CD14-positive monocyte (primary cell): ENCODE measurements at regions of chrX and their contacts with region 1.

Region 1: DNA sequence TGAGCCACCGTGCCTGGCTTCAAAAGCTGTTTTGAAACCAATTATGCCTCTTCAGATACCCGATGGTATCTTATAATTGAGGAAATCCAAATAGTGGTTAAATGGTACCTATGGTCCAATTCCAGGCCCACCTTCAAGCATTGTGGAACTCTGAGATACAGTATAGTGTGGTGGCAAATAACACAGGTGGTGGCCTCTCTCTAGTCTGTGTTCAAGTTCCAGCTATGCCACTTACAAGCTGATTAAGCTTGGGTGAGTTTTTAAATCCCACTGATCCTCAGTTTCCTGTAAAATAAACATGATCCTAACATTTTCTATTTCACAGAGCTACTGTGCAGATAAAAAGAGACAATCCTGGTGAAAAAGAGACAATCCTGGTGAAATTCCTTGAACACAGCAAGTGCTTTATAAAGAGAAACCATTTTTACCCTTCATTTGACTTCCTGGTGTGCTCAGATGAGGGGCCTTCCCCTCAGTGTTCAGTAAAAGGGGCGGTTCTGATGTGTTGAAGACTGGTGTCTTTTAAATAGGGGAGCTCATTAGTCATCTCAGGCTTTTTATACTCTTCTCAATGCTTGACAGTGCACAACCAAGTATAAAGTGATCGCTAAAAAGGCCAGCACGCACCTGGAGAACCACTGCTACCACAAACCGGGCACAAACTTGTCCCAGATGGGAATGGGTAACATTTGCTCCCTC is 30.8 kb upstream of the CD40LG start:
- DNase-seq: no peak
- H3K4me3 ChIP-seq: no peak overlapping the region
- H3K4me3 Mint-ChIP-seq: no peak overlapping the region
- H3K27ac ChIP-seq: no peak overlapping the region
- H3K27ac Mint-ChIP-seq: no peak overlapping the region
- H3K4me1 ChIP-seq: no peaks in the 10 kb centered on the region
- H3K4me1 Mint-ChIP-seq: no peaks in the 10 kb centered on the region
- H3K27me3 ChIP-seq: no peaks in the 10 kb centered on the region
- H3K27me3 Mint-ChIP-seq: peaks cover 0 to 3% (median 0%) of the 10 kb centered on the region in 3 donors
- CTCF ChIP-seq: no peak

Region 2: DNA sequence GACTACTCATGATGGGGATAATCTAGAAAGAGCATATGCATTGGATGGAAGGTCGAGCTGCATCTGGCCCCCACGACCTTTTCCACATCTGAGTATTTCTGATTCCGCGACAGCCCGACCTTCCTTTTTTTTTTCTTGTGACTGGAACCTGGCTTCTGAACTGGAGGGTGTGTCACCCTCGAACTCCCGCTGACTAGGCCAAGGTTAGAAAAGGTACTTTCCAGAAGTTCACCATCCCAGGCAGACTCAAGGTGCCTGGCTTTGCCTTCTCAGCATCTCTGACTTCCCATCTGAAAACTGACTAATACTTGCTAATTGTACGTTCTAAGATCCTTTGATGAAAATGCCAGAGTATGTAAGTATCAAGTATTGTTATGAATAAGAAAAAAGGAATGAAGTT is 18.5 kb before region 1 on chrX:
- intact Hi-C with region 1: no loop called
- DNase-seq: no peak
- H3K4me3 ChIP-seq: no peak overlapping the region
- H3K4me3 Mint-ChIP-seq: no peak overlapping the region
- H3K27ac ChIP-seq: no peak overlapping the region
- H3K27ac Mint-ChIP-seq: no peak overlapping the region
- H3K4me1 ChIP-seq: no peaks in the 10 kb centered on the region
- H3K4me1 Mint-ChIP-seq: peaks cover 4% of the 10 kb centered on the region
- H3K27me3 ChIP-seq: no peaks in the 10 kb centered on the region
- H3K27me3 Mint-ChIP-seq: peaks cover 0 to 8% (median 0%) of the 10 kb centered on the region in 3 donors
- CTCF ChIP-seq: no peak

Region 3: DNA sequence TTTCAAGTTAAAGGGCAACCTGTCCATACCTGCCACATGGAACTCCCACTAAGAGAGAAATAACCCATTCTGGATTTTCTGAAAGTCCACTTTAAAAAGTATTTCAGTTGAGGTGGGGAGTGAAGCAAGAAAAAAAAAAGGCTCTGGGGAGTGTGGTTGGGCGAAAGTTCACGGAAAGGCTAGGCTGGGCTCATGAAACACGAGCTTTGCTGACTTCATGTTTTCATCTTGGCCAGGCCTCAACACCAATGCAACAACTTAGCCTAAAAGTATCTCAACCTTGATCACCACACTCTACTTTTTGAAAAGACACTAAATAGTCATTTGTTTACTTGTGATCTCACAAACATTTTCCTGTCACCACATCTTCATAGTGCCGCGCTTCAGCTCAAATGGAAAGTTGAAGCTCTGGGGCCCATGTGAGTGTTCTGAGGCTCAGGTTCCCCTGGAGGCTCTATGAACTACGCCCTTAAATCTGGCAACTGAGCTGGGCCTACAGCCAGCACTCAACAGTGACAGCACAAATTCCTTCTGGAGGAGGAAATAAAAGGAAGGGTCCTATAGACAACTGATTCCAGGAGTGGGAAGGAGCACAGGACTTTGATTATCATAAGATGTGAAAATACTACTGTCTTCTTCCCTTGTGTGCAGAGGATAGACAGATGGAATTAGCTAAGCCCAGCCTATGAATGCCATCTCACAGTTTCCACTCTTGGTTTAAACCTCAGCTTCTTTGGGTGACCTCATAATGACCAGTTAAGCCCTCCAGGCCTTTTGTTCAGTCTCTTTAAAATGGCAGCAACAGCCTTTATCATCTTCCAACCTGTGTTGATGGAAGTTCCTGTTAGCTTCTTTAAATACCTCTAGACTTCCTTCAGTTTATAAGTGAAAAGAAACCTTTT is 35.9 kb after region 1 on chrX:
- intact Hi-C with region 1: no loop called
- DNase-seq: no peak
- H3K4me3 ChIP-seq: no peak overlapping the region
- H3K4me3 Mint-ChIP-seq: no peak overlapping the region
- H3K27ac ChIP-seq: no peak overlapping the region
- H3K27ac Mint-ChIP-seq: peak overlapping the region in 1 of 7 donors; percentile 26
- H3K4me1 ChIP-seq: no peaks in the 10 kb centered on the region
- H3K4me1 Mint-ChIP-seq: no peaks in the 10 kb centered on the region
- H3K27me3 ChIP-seq: no peaks in the 10 kb centered on the region
- H3K27me3 Mint-ChIP-seq: peaks cover 0 to 4% (median 0%) of the 10 kb centered on the region in 3 donors
- CTCF ChIP-seq: no peak

Region 4: GRCh38 chrX:136933611-136934145 is 316.5 kb after region 1 on chrX:
- intact Hi-C with region 1: loop called in 1 of 2 experiments (anchors 10 kb)
- DNase-seq: no peak
- H3K4me3 ChIP-seq: no peak overlapping the region
- H3K4me3 Mint-ChIP-seq: no peak overlapping the region
- H3K27ac ChIP-seq: no peak overlapping the region
- H3K27ac Mint-ChIP-seq: peak overlapping the region in 2 of 7 donors; percentile 2 to 19
- H3K4me1 ChIP-seq: no peaks in the 10 kb centered on the region
- H3K4me1 Mint-ChIP-seq: no peaks in the 10 kb centered on the region
- H3K27me3 ChIP-seq: no peaks in the 10 kb centered on the region
- H3K27me3 Mint-ChIP-seq: peaks cover 0 to 2% (median 0%) of the 10 kb centered on the region in 3 donors
- CTCF ChIP-seq: no peak

Region 5: GRCh38 chrX:137151403-137151802 is 534.3 kb after region 1 on chrX:
- intact Hi-C with region 1: no loop called
- DNase-seq: no peak
- H3K4me3 ChIP-seq: no peak overlapping the region
- H3K4me3 Mint-ChIP-seq: no peak overlapping the region
- H3K27ac ChIP-seq: no peak overlapping the region
- H3K27ac Mint-ChIP-seq: no peak overlapping the region
- H3K4me1 ChIP-seq: no peaks in the 10 kb centered on the region
- H3K4me1 Mint-ChIP-seq: no peaks in the 10 kb centered on the region
- H3K27me3 ChIP-seq: no peaks in the 10 kb centered on the region
- H3K27me3 Mint-ChIP-seq: peaks cover 0 to 8% (median 2%) of the 10 kb centered on the region in 3 donors
- CTCF ChIP-seq: no peak